K562 (cell line): ENCODE measurements at regions of chr18 and their contacts with region 1.

Region 1: DNA sequence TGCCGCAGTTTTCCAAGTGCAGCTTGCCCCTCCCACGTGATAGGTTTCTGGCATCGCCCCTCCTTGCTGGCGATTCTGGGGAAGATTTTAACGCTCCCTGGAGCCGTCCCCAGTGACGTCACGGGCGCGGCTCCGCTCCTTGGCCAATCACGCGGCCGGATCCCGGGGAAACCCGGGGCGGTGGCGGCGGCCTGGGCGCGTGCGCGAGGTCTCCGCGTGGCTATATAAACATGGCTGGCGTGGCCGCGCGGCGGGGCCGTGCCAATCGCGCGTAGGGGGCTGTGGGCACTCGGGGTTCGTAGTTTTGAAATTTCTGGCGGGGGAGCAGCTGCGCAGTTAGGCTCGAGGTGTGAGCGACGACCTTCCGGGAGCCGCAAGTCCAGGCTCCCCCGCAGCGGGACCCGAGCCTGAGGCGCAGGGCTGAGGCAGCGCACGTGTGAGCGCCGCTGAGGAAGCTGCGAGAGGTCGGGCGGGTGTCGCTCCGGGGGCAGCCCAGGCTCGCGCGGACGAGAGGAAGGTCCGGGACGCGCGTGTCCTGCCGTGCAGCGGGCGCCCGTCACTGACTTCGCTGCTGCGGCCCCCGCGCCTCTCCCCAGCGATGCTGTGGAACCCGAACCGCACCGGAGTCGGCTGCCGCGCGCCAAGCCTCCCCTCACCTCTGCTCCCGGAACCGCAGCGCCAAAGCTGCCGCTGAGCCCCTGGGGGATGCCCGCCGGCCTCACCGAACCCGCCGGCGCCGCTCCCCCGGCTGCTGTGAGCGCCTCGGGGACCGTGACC is at the start of gene TAF4B:
- DNase-seq: peak; percentile 98 to 99 (median 98)
- ATAC-seq: peak; percentile 89
- H3K4me3 ChIP-seq: peak within 1 kb of the TSS; percentile 92
- H3K27ac ChIP-seq: peak within 1 kb of the TSS; percentile 86
- H3K4me1 ChIP-seq: peaks cover 10 to 32% of the 10 kb centered on the region in 2 experiments; a peak in 4 of 5 replicates
- H3K27me3 ChIP-seq: peaks cover 0 to 2% of the 10 kb centered on the region in 2 experiments; a peak in 2 of 5 replicates
- CTCF ChIP-seq: no peak
- EP300 ChIP-seq: no peak; the same call in none of the 2 replicates
- POLR2A ChIP-seq: peak; percentile 93
- RAD21 ChIP-seq: no peak
- polyA plus RNA-seq, gene TAF4B: 4.5 to 5.8 TPM

Region 2: GRCh38 chr18:26090130-26091046 is 136.0 kb before region 1 on chr18 and contains the start of gene SS18:
- CTCF ChIA-PET with region 1: no interaction called
- POLR2A ChIA-PET with region 1: interaction called, 3 read pairs
- in situ Hi-C with region 1: no loop called
- intact Hi-C with region 1: loop called (anchors 1 kb)
- DNase-seq: peak; percentile 93 to 98 (median 95)
- ATAC-seq: peak; percentile 88
- H3K4me3 ChIP-seq: peak within 1 kb of the TSS; percentile 77
- H3K27ac ChIP-seq: peak within 1 kb of the TSS; percentile 91
- H3K4me1 ChIP-seq: peaks cover 12 to 17% of the 10 kb centered on the region in 2 experiments; a peak in 4 of 5 replicates
- H3K27me3 ChIP-seq: no peaks in the 10 kb centered on the region
- CTCF ChIP-seq: peak in 1 of 3 experiments; percentile 6; a peak in 1 of 6 replicates
- EP300 ChIP-seq: no peak
- POLR2A ChIP-seq: peak; percentile 98
- RAD21 ChIP-seq: no peak
- polyA plus RNA-seq, gene SS18: 30.9 to 87.7 TPM

Region 3: DNA sequence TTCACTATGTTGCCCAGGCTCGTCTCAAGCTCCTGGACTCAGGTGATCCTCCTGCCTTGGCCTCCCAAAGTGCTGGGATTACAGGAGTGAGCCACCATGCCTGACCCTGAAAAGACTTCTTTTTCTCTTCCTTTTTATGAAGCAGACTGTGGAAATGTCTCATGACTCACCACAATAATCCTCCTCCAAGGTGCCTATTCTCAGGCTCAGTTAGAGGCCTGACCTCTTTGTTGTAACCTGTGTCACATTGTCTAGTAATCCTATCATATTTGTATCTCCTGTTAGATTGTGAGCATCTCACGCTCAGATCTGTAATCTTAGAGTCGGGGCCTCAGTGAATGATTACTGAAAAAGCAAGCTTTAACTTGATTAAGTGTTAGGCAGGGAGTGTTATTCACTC is 18.5 kb before region 1 on chr18:
- CTCF ChIA-PET with region 1: no interaction called
- POLR2A ChIA-PET with region 1: interaction called, 5 read pairs
- in situ Hi-C with region 1: no loop called
- intact Hi-C with region 1: loop called (anchors 2 kb)
- DNase-seq: no peak
- ATAC-seq: peak; percentile 36
- H3K4me3 ChIP-seq: no peak overlapping the region
- H3K27ac ChIP-seq: no peak overlapping the region
- H3K4me1 ChIP-seq: no peaks in the 10 kb centered on the region
- H3K27me3 ChIP-seq: peaks cover 0 to 15% of the 10 kb centered on the region in 2 experiments; a peak in 4 of 5 replicates
- CTCF ChIP-seq: no peak
- EP300 ChIP-seq: no peak
- POLR2A ChIP-seq: no peak
- RAD21 ChIP-seq: no peak

Region 4: DNA sequence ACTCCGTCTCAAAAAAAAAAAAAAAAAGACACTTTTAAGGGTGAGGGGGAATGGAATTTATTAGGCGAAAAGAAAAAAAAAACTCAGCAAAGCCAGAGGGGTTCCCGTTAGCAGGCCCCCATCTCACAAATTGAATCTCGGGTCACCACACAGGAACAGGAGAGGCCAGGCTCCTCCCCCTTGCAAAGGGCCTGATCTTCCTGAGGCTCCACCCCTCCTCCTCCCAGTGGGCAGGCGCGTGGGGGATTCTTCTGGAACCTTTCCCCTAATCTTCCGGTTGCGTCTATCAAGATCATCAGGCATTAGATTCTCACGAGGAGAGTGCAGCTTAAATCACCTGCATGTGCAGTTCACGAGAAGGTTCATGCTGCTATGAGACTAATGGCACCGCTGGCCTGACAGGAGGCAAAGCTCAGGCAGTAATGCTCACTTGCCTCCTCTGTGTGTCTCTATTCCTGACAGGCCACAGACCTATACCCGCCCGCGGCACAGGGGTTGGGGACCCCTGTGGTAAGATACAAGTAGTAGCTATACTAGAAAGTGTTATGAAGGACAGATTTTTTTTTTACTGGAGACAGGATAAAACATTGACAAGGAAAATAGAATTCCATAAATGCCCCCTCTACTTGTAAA is 45.6 kb after region 1 on chr18:
- CTCF ChIA-PET with region 1: no interaction called
- POLR2A ChIA-PET with region 1: no interaction called
- in situ Hi-C with region 1: no loop called
- intact Hi-C with region 1: loop called (anchors 5 kb)
- DNase-seq: no peak
- ATAC-seq: peak; percentile 69
- H3K4me3 ChIP-seq: no peak overlapping the region
- H3K27ac ChIP-seq: no peak overlapping the region
- H3K4me1 ChIP-seq: no peaks in the 10 kb centered on the region; a peak in 1 of 5 replicates
- H3K27me3 ChIP-seq: no peaks in the 10 kb centered on the region
- CTCF ChIP-seq: no peak
- EP300 ChIP-seq: no peak
- POLR2A ChIP-seq: no peak
- RAD21 ChIP-seq: no peak

Region 5: DNA sequence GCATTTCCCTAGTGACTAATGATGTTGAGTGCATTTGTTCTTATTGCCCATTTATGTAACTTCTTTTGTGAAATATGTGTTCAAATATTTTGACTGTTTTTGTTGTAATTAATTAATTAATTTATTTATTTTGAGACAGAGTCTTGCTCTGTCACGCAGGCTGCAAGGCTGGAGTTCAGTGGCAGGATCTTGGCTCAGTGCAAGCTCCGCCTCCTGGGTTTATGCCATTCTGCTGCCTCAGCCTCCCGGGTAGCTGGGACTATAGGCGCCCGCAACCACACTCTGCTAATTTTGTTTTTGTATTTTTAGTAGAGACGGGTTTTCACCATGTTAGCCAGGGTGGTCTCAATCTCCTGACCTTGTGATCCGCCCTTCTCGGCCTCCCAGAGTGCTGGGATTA is 71.7 kb after region 1 on chr18:
- CTCF ChIA-PET with region 1: no interaction called
- POLR2A ChIA-PET with region 1: no interaction called
- in situ Hi-C with region 1: no loop called
- intact Hi-C with region 1: loop called (anchors 5 kb)
- DNase-seq: no peak
- ATAC-seq: no peak
- H3K4me3 ChIP-seq: no peak overlapping the region
- H3K27ac ChIP-seq: no peak overlapping the region
- H3K4me1 ChIP-seq: 0 out of 5 replicates have a peak, but pooled peaks cover 0 to 5% of the 10 kb centered on the region in 2 experiments
- H3K27me3 ChIP-seq: no peaks in the 10 kb centered on the region
- CTCF ChIP-seq: no peak
- EP300 ChIP-seq: no peak
- POLR2A ChIP-seq: no peak
- RAD21 ChIP-seq: no peak